GM12878 (cell line): ENCODE measurements at regions of chr7 and their contacts with region 1.

Region 1: GRCh38 chr7:148262721-148263229 is 327.8 kb upstream of the C7orf33 start:
- DNase-seq: no peak
- ATAC-seq: peak; percentile 89
- H3K4me3 ChIP-seq: no peak overlapping the region
- H3K27ac ChIP-seq: no peak overlapping the region
- H3K4me1 ChIP-seq: no peaks in the 10 kb centered on the region
- H3K27me3 ChIP-seq: no peaks in the 10 kb centered on the region; a peak in 1 of 4 replicates
- CTCF ChIP-seq: peak; percentile 80 to 94 (median 90)
- EP300 ChIP-seq: no peak
- POLR2A ChIP-seq: no peak
- RAD21 ChIP-seq: peak; percentile 63

Region 2: GRCh38 chr7:147245292-147245691 is 1017.5 kb before region 1 on chr7:
- CTCF ChIA-PET with region 1: interaction called, 3 read pairs
- POLR2A ChIA-PET with region 1: no interaction called
- RAD21 ChIA-PET with region 1: no interaction called
- SMC1A ChIA-PET with region 1: no interaction called
- in situ Hi-C with region 1: no loop called
- intact Hi-C with region 1: loop called (anchors 10 kb)
- DNase-seq: no peak
- ATAC-seq: peak; percentile 81
- H3K4me3 ChIP-seq: no peak overlapping the region
- H3K27ac ChIP-seq: no peak overlapping the region
- H3K4me1 ChIP-seq: no peaks in the 10 kb centered on the region
- H3K27me3 ChIP-seq: no peaks in the 10 kb centered on the region
- CTCF ChIP-seq: peak; percentile 60 to 80 (median 64); a peak in 5 of 6 replicates
- EP300 ChIP-seq: no peak
- POLR2A ChIP-seq: no peak
- RAD21 ChIP-seq: peak; percentile 62

Region 3: DNA sequence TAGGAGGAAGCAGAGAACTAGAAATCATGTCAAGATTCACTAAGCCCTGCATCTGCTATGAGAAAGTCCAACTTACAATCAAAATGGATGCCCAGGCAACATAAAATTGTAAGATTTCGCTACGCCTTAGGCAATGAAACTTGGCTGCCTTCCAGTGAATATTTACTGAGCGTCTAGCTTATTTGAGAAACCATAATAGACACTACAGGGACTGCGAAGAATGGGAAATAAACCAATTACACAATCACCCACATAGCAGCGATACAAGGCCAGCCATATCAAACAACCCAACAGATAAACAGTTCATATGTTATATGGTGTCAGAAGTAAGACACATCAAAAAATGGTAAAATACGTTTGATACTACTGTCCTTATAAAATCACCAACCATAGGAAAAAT is 217.3 kb before region 1 on chr7:
- CTCF ChIA-PET with region 1: no interaction called
- POLR2A ChIA-PET with region 1: no interaction called
- RAD21 ChIA-PET with region 1: no interaction called
- SMC1A ChIA-PET with region 1: no interaction called
- in situ Hi-C with region 1: no loop called
- intact Hi-C with region 1: no loop called
- DNase-seq: no peak
- ATAC-seq: no peak
- H3K4me3 ChIP-seq: no peak overlapping the region
- H3K27ac ChIP-seq: no peak overlapping the region
- H3K4me1 ChIP-seq: no peaks in the 10 kb centered on the region; the same call in 1 of the 2 replicates
- H3K27me3 ChIP-seq: no peaks in the 10 kb centered on the region
- CTCF ChIP-seq: no peak
- EP300 ChIP-seq: no peak
- POLR2A ChIP-seq: no peak
- RAD21 ChIP-seq: no peak

Region 4: GRCh38 chr7:148095066-148095465 is 167.7 kb before region 1 on chr7:
- CTCF ChIA-PET with region 1: no interaction called
- POLR2A ChIA-PET with region 1: no interaction called
- RAD21 ChIA-PET with region 1: no interaction called
- SMC1A ChIA-PET with region 1: no interaction called
- in situ Hi-C with region 1: no loop called
- intact Hi-C with region 1: no loop called
- DNase-seq: no peak
- ATAC-seq: no peak
- H3K4me3 ChIP-seq: no peak overlapping the region
- H3K27ac ChIP-seq: no peak overlapping the region
- H3K4me1 ChIP-seq: no peaks in the 10 kb centered on the region
- H3K27me3 ChIP-seq: no peaks in the 10 kb centered on the region; a peak in 1 of 4 replicates
- CTCF ChIP-seq: no peak
- EP300 ChIP-seq: no peak
- POLR2A ChIP-seq: no peak
- RAD21 ChIP-seq: no peak

Region 5: DNA sequence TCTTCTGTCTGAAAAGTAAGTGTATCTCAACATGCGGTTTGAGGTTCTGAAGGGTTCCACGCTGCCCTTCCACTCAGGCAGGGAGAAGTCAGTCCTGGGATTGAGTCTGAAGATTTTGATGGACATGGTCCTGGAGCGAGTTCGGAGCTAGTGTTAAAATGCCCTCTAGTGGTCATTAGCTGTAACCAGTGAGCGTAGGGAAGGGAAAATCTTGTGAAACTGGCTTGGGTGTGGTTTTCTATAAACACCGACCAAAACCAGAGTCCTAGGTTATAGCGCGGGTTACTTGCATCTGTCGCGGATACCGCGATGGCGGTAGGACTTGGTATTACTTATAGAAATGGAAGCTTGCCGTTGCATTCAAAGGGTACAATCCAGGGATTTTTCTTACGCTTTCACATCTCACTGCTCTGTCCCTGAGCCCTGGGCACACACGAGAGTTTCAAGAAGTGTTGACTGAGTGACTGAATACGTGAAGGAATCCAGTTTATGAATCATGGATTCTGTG is 20.4 kb before region 1 on chr7:
- CTCF ChIA-PET with region 1: interaction called, 11 read pairs
- POLR2A ChIA-PET with region 1: no interaction called
- RAD21 ChIA-PET with region 1: no interaction called
- SMC1A ChIA-PET with region 1: interaction called, 6 read pairs
- in situ Hi-C with region 1: no loop called
- intact Hi-C with region 1: no loop called
- DNase-seq: no peak
- ATAC-seq: peak; percentile 90
- H3K4me3 ChIP-seq: no peak overlapping the region
- H3K27ac ChIP-seq: no peak overlapping the region
- H3K4me1 ChIP-seq: no peaks in the 10 kb centered on the region
- H3K27me3 ChIP-seq: no peaks in the 10 kb centered on the region; a peak in 1 of 4 replicates
- CTCF ChIP-seq: peak; percentile 67 to 87 (median 86)
- EP300 ChIP-seq: no peak
- POLR2A ChIP-seq: no peak
- RAD21 ChIP-seq: peak; percentile 66

Region 6: GRCh38 chr7:148485618-148486017 is 222.8 kb after region 1 on chr7:
- CTCF ChIA-PET with region 1: interaction called, 7 read pairs
- POLR2A ChIA-PET with region 1: no interaction called
- RAD21 ChIA-PET with region 1: interaction called, 6 read pairs
- SMC1A ChIA-PET with region 1: interaction called, 4 read pairs
- in situ Hi-C with region 1: loop called (anchors 25 kb)
- intact Hi-C with region 1: loop called (anchors 1 kb)
- DNase-seq: no peak
- ATAC-seq: no peak
- H3K4me3 ChIP-seq: no peak overlapping the region
- H3K27ac ChIP-seq: no peak overlapping the region
- H3K4me1 ChIP-seq: no peaks in the 10 kb centered on the region
- H3K27me3 ChIP-seq: peaks cover 0 to 2% of the 10 kb centered on the region in 2 experiments; a peak in 2 of 4 replicates
- CTCF ChIP-seq: peak in 1 of 3 experiments; percentile 14; a peak in 1 of 6 replicates
- EP300 ChIP-seq: no peak
- POLR2A ChIP-seq: no peak
- RAD21 ChIP-seq: peak; percentile 34; the same call in 1 of the 2 replicates

Region 7: GRCh38 chr7:148527707-148528168 is 265.0 kb after region 1 on chr7:
- CTCF ChIA-PET with region 1: interaction called, 13 read pairs
- POLR2A ChIA-PET with region 1: no interaction called
- RAD21 ChIA-PET with region 1: interaction called, 4 read pairs
- SMC1A ChIA-PET with region 1: interaction called, 3 read pairs
- in situ Hi-C with region 1: no loop called
- intact Hi-C with region 1: loop called (anchors 1 kb)
- DNase-seq: peak; percentile 47
- ATAC-seq: peak; percentile 100
- H3K4me3 ChIP-seq: no peak overlapping the region
- H3K27ac ChIP-seq: no peak overlapping the region
- H3K4me1 ChIP-seq: no peaks in the 10 kb centered on the region
- H3K27me3 ChIP-seq: no peaks in the 10 kb centered on the region; a peak in 2 of 4 replicates
- CTCF ChIP-seq: peak; percentile 82 to 95 (median 87)
- EP300 ChIP-seq: no peak
- POLR2A ChIP-seq: no peak
- RAD21 ChIP-seq: peak; percentile 74

Region 8: DNA sequence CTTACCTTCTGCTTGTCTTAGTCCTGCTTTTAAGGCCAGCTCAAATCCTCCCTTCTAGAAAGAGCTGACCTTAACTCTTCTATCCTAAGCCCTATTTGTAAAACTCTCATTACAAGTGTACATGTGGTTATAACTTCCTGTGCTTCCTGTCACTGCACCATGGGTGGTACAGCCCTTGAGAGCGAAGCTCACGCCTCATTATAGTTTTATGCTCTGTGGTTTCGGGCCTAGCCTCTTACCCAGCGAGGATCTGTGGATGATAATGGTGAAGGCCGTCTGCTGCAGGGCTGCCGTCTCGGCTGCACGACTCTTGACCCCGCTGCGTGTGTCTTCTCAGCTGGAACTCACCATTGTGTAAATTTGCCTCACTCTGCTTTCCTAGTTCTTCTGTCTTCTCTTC is 510.6 kb after region 1 on chr7:
- CTCF ChIA-PET with region 1: no interaction called
- POLR2A ChIA-PET with region 1: no interaction called
- RAD21 ChIA-PET with region 1: no interaction called
- SMC1A ChIA-PET with region 1: no interaction called
- in situ Hi-C with region 1: no loop called
- intact Hi-C with region 1: loop called (anchors 5 kb)
- DNase-seq: peak; percentile 11
- ATAC-seq: no peak; the same call in 2 of the 3 replicates
- H3K4me3 ChIP-seq: no peak overlapping the region
- H3K27ac ChIP-seq: no peak overlapping the region
- H3K4me1 ChIP-seq: no peaks in the 10 kb centered on the region
- H3K27me3 ChIP-seq: no peaks in the 10 kb centered on the region
- CTCF ChIP-seq: no peak
- EP300 ChIP-seq: no peak
- POLR2A ChIP-seq: no peak
- RAD21 ChIP-seq: no peak